Activated T-helper 2 cell treated with anti-CD3 and anti-CD28 coated beads, Interferon-gamma antibody, Interleukin-2, Interleukin-4, amounts not matched to agents 10 μg/mL and 5 μg/mL and 100 μg/mL, durations not matched to agents 14 hours and 24 hours and 36 hours (primary cell): ENCODE measurements at regions of chr11 and their contacts with region 1.

Region 1: DNA sequence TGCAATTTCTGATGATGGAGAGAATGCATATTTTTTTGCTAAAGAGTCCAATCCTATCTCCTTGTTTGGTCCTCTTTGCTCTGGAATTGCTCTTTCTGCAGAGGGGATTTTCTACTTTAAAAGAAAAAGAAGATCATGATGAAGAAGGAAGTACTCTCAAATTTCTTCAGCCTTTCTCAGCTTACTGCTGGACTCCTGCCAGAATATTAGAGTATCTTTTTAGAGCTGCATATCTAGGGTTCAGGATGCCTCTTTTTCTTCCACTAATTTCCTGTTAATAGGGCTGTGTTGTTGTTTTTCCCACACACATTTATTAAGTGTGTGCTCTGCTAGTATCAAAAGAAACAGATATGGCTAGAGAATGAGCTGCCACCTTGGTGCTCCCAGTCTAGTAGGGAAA is 18.2 kb downstream of the UBASH3B start:
- DNase-seq: no peak
- H3K4me3 Mint-ChIP-seq: no peak overlapping the region
- H3K27ac Mint-ChIP-seq: no peak overlapping the region
- H3K4me1 Mint-ChIP-seq: peaks cover 39% of the 10 kb centered on the region
- H3K27me3 Mint-ChIP-seq: peaks cover 2% of the 10 kb centered on the region

Region 2: GRCh38 chr11:122655527-122656072 is 18.1 kb before region 1 on chr11 and contains the start of gene UBASH3B:
- intact Hi-C with region 1: no loop called
- DNase-seq: peak; percentile 55
- H3K4me3 Mint-ChIP-seq: peak within 1 kb of the TSS; percentile 94
- H3K27ac Mint-ChIP-seq: peak within 1 kb of the TSS; percentile 81
- H3K4me1 Mint-ChIP-seq: peaks cover 9% of the 10 kb centered on the region
- H3K27me3 Mint-ChIP-seq: peaks cover 61% of the 10 kb centered on the region
- total RNA-seq, gene UBASH3B: 19.3 and 20.1 TPM in 2 replicates

Region 3: GRCh38 chr11:122711831-122712381 is 38.2 kb after region 1 on chr11:
- intact Hi-C with region 1: no loop called
- DNase-seq: no peak
- H3K4me3 Mint-ChIP-seq: no peak overlapping the region
- H3K27ac Mint-ChIP-seq: no peak overlapping the region
- H3K4me1 Mint-ChIP-seq: peaks cover 12% of the 10 kb centered on the region
- H3K27me3 Mint-ChIP-seq: peaks cover 3% of the 10 kb centered on the region

Region 4: GRCh38 chr11:122749005-122749687 is 75.4 kb after region 1 on chr11:
- intact Hi-C with region 1: loop called (anchors 2 kb)
- DNase-seq: peak; percentile 59
- H3K4me3 Mint-ChIP-seq: no peak overlapping the region
- H3K27ac Mint-ChIP-seq: no peak overlapping the region
- H3K4me1 Mint-ChIP-seq: peaks cover 64% of the 10 kb centered on the region
- H3K27me3 Mint-ChIP-seq: peaks cover 5% of the 10 kb centered on the region